ENCODE measurements at regions of chr14 and their contacts with region 1.

Region 1: DNA sequence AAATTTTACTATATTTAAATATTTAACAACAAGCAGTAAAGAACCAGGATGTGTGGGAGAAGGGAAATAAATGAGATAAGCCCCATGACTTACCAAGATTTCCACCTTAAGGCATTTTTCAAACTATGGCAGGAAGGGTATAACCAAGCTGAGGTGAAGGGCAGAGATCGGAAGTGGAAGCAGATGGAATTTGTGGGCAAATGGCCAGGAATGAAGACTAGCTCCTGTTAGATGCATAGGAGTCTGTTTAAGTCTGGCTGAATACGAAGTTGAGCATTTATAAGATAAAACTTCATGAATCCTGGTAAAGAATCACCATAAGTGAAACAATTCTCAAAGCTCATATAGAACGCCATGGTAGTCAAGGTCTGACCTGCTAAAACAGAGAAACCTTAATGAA is 163.5 kb downstream of the DIO2 start:
- DNase-seq: no peak
- H3K4me3 ChIP-seq: no peak overlapping the region
- H3K27ac ChIP-seq: no peak overlapping the region
- H3K4me1 ChIP-seq: no peaks in the 10 kb centered on the region
- H3K27me3 ChIP-seq: no peaks in the 10 kb centered on the region
- CTCF ChIP-seq: no peak

Region 2: DNA sequence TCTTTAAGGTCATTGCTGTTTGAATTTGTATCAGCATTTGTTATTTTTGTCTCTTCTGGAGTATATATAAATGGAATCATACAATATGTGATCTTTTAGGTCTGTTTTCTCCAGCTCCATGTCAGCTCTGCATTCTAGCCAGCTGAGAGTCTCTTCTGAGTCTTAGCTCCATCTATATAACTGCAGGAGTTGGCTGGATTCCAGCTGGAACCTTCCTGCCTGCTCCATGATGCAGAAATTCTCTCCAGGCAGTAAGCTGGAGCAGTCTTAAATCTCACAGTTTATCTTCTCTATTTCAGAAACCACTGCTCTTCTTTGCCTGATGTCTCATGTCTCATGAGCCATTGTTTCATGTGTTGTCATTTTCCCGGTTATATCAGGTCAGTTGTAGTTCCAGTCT is 1050.0 kb before region 1 on chr14:
- CTCF ChIA-PET with region 1: no interaction called
- dilution Hi-C with region 1: no loop called
- in situ Hi-C with region 1: loop called in 1 of 2 experiments (anchors 25 kb)
- intact Hi-C with region 1: no loop called
- DNase-seq: no peak
- H3K4me3 ChIP-seq: no peak overlapping the region
- H3K27ac ChIP-seq: no peak overlapping the region
- H3K4me1 ChIP-seq: no peaks in the 10 kb centered on the region
- H3K27me3 ChIP-seq: no peaks in the 10 kb centered on the region
- CTCF ChIP-seq: no peak

Measured in mammary epithelial cell (primary cell).